Right ventricle myocardium inferior (tissue), 1 donor: ENCODE measurements at regions of chr5 and their contacts with region 1.

Region 1: GRCh38 chr5:72138943-72139521 is 31.8 kb downstream of the MAP1B start:
- DNase-seq: no peak
- ATAC-seq: peak; percentile 34

Region 2: DNA sequence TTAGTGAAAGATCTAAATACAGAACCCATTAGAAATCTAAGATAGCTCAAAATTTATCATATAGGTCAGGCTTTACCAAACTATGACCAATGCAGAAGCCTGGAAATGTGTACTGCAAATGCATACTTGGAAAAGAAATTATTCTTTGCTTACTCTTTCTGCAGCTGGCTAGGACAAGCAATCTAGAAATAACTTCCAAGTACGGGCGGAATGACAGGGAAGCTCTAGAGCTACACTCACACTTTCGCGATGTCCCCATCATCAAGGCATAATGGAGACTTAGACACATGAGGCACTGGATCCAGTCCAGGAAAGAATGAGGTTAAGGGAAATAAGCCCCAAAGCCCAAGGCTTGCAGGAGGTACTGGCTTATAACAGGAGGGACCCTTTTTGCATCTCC is 54.2 kb before region 1 on chr5:
- intact Hi-C with region 1: no loop called
- DNase-seq: no peak
- ATAC-seq: no peak

Region 3: DNA sequence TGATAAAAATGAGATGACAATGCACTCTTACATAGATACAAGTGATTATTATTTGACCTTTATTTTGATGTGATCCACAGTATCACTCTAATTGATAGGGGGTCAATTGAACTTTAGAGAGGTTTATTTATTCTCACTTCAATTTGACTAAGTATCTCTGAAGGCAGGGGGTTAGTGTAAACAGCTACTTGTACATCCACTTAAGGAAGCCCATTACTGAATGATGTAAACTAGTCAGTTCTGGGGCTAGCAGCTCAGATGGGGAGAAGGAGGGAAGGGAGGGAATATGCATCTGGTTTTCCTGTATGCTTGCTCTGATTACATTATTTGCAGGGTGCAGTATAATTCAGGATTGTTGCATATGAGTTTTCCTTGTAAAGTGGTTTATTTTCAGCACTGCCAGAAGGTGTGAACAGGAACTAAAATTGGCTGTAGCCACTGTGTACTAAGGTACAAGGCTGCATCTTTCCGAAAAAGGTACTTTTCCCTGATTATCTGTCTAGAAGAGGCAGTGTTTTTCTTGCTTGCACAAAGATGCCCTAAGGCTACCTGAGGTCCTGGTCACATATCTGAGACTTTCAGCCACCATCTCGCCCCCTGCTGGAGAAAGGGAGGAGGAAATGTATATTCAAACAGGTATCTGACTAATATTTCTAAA is 129.8 kb after region 1 on chr5:
- intact Hi-C with region 1: loop called (anchors 5 kb)
- DNase-seq: no peak
- ATAC-seq: no peak

Region 4: GRCh38 chr5:72307968-72308852 is 169.2 kb after region 1 on chr5:
- intact Hi-C with region 1: loop called (anchors 1 kb)
- DNase-seq: peak; percentile 99
- ATAC-seq: peak; percentile 99